AG04449 (cell line): ENCODE measurements at regions of chr4 and their contacts with region 1.

Region 1: DNA sequence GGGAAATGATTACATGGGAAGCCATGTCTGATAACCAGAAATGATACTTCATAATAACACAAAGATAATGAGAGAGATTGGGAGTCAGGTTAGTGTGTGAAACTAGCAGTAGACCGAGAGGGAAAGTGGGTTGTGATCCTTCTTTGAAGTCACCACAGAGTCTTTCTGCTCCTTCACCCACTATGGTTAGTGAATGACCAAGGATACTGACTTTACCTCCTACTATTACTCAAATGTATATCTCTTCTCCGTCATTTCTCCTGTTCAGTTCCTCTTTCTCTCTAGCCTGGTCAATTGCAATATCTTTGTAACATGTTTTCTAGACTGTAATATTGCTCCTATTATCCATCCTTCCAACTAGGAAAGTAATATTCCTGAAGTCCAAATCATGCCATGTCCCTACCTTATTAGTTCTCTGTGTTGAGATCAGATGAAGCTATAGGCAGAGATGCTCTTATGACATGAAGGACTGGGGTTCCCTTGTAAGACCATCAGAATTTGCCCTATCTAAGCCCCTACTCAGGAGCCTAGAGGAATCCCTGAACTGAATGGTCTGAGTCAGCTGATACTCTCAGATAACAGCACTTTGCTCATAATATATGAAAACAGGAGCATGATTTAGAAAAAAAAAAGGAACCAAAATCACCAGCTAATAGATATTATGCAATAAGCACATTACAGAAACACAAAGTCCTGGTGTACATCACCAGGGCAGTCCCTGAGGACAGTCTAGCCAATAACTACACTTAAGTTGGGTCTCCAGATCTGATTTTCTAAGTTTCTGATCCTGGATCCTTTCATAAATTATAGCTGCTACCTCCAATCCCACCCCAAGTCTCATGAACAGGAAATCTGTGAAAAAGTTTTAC is 81.2 kb downstream of the SHROOM3 start:
- DNase-seq: no peak
- H3K4me3 ChIP-seq: no peak overlapping the region
- CTCF ChIP-seq: no peak

Region 2: GRCh38 chr4:76744241-76744921 is 228.2 kb after region 1 on chr4:
- CTCF ChIA-PET with region 1: interaction called, 20 read pairs
- POLR2A ChIA-PET with region 1: no interaction called
- DNase-seq: no peak
- H3K4me3 ChIP-seq: peak overlapping the region; percentile 27
- CTCF ChIP-seq: no peak